ENCODE measurements at regions of chrX and their contacts with region 1.

Region 1: DNA sequence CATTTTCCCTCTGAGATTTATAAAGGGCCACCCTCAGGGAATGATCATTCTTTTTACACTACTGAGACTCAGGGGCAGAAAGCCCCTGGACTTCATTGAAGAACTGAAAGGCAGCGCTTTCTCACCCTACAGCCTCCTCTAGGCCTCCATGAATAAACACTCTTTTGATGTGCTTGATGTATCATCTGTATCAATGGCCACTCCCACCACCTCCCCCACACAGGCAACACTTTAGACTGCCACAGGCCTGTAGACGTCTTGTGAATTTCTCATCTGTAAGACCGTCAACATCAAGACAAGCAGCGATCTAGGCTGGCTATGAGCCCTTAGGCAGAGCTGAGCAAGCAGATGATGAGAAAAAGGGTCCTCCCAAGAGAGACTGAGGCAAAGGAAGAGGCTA is 123.2 kb downstream of the HUWE1 start:
- DNase-seq: no peak
- H3K4me3 Mint-ChIP-seq: no peak overlapping the region
- H3K27ac Mint-ChIP-seq: no peak overlapping the region
- H3K4me1 Mint-ChIP-seq: no peaks in the 10 kb centered on the region
- H3K27me3 Mint-ChIP-seq: no peaks in the 10 kb centered on the region

Region 2: GRCh38 chrX:53616946-53617345 is 53.6 kb after region 1 on chrX:
- intact Hi-C with region 1: loop called (anchors 5 kb)
- DNase-seq: no peak
- H3K4me3 Mint-ChIP-seq: no peak overlapping the region
- H3K27ac Mint-ChIP-seq: no peak overlapping the region
- H3K4me1 Mint-ChIP-seq: peaks cover 7% of the 10 kb centered on the region
- H3K27me3 Mint-ChIP-seq: no peaks in the 10 kb centered on the region

Region 3: DNA sequence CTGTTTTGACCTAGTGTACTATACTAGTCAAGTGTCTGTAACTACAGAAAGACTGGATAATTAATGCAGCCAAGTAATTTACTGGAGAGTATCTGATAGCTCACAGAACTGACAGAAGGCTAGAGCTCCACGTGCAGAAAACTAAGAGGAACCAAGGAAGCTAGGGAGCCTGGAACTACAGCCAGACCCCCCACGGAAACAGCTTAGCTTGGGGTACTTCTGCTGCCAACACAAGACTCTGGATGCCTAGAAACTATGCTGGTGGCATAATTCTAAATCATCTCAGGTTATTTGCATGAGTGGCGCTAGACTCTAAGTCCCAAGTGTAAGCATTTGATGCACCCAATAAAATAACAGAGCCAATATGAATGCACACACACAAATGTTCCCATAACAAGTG is 96.7 kb after region 1 on chrX:
- intact Hi-C with region 1: no loop called
- DNase-seq: no peak
- H3K4me3 Mint-ChIP-seq: no peak overlapping the region
- H3K27ac Mint-ChIP-seq: no peak overlapping the region
- H3K4me1 Mint-ChIP-seq: peaks cover 24% of the 10 kb centered on the region
- H3K27me3 Mint-ChIP-seq: no peaks in the 10 kb centered on the region

Region 4: DNA sequence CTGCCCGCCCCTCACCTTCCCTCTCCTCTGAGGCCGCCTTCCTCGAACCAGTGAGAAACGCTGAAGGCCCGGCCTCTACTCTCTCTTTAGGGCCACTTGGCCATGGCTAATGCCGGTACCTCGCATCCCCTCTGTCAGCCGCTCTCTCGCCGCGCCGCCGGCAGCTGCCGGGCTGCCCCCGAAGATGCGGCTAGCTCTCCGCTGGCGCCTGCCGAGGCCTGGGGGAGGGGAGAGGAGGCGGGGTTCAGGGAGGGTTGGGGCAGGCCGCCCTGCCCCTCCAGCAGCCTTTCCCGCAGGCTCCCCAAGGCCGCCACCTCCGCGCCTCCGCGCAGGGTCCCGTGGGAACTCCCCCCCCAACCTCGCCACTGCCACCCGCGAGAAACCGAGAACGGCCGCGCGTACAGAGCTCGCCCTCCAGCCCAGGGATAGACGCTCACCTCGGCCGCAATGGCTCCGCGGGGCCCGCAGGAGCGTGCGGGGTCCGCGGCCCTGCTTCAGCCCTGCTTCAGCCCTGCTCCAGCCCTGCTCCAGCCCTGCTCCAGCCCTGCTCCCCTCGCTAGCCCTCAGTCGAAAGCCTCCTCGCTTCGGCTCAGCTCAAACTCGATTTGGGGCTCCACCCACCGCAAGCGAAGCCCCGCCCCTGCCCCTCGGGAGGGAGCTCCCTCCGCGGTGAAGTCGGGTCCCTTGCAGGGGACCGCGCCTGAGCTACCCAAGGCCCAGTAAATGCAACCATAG is 123.0 kb after region 1 on chrX and contains the start of gene HUWE1:
- intact Hi-C with region 1: no loop called
- DNase-seq: peak; percentile 80
- H3K4me3 Mint-ChIP-seq: peak within 1 kb of the TSS; percentile 91
- H3K27ac Mint-ChIP-seq: peak within 1 kb of the TSS; percentile 80
- H3K4me1 Mint-ChIP-seq: peaks cover 22% of the 10 kb centered on the region
- H3K27me3 Mint-ChIP-seq: no peaks in the 10 kb centered on the region
- total RNA-seq, gene HUWE1: 367 and 385 TPM in 2 replicates

Measured in activated T-helper 1 cell treated with anti-CD3 and anti-CD28 coated beads, Interleukin-12 subunit alpha, Interleukin-12 subunit beta, Interleukin-2, Interleukin-4 antibody, amounts not matched to agents 30 ng/mL and 10 ng/mL and 1 ng/mL, durations not matched to agents 14 hours and 24 hours and 36 hours (primary cell).